B cell (primary cell): ENCODE measurements at regions of chr1 and their contacts with region 1.

Region 1: DNA sequence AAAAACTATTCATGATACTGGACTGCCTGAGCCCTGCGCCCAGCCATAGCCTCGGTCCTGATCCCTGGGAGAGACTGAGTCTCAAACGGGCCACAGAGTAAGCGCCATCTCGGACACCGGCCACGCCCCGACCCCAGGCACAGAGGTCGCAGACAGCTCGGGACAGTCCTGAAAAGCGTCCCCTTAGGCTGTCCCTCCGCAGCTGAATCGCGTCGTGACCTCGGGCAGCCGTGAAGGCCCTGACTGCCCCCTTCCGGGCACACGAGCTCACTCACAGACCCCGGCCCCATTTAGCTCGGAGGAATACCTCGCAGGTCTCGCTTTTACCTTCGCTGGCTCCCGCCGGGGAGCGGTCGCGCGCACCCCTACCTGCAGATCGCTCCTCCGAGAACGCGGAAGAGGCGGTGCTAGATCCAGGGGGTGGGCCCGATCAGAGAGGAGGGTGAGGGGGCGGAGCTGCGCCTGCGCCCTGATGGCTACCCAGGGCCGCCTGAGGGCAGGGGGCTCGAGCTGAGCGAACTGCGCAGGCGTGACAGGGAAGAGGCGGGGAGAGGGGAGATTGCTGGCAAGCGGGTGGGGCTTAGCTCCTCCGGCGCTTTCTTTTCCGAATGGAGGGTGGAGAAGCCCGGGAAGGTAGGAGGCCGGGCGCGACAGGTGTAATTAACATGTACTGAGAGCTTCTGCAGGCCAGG is at the start of gene MKNK1:
- DNase-seq: peak; percentile 98
- ATAC-seq: peak; percentile 99
- H3K4me3 ChIP-seq: peak within 1 kb of the TSS; percentile 72 to 95 (median 92)
- H3K4me3 Mint-ChIP-seq: peak within 1 kb of the TSS; percentile 96
- H3K27ac ChIP-seq: peak within 1 kb of the TSS; percentile 14 to 62
- H3K27ac Mint-ChIP-seq: peak within 1 kb of the TSS; percentile 95
- H3K4me1 ChIP-seq: peaks cover 12 to 15% of the 10 kb centered on the region in 2 donors
- H3K4me1 Mint-ChIP-seq: peaks cover 27% of the 10 kb centered on the region
- H3K27me3 ChIP-seq: no peaks in the 10 kb centered on the region
- H3K27me3 Mint-ChIP-seq: no peaks in the 10 kb centered on the region
- CTCF ChIP-seq: no peak
- total RNA-seq, gene MKNK1: 69.5 and 73.0 TPM in 2 replicates

Region 2: GRCh38 chr1:46616277-46617107 is 12.5 kb after region 1 on chr1 and contains the start of gene MOB3C:
- CTCF ChIA-PET with region 1: interaction called, 40 read pairs
- POLR2A ChIA-PET with region 1: interaction called, 27 read pairs
- intact Hi-C with region 1: loop called (anchors 1 kb)
- DNase-seq: peak; percentile 72
- ATAC-seq: peak; percentile 88
- H3K4me3 ChIP-seq: peak within 1 kb of the TSS; percentile 73 to 95 (median 82)
- H3K4me3 Mint-ChIP-seq: peak within 1 kb of the TSS; percentile 94
- H3K27ac ChIP-seq: peak within 1 kb of the TSS; percentile 74 to 85
- H3K27ac Mint-ChIP-seq: peak within 1 kb of the TSS; percentile 93
- H3K4me1 ChIP-seq: peaks cover 56 to 74% of the 10 kb centered on the region in 2 donors
- H3K4me1 Mint-ChIP-seq: peaks cover 61% of the 10 kb centered on the region
- H3K27me3 ChIP-seq: no peaks in the 10 kb centered on the region
- H3K27me3 Mint-ChIP-seq: no peaks in the 10 kb centered on the region
- CTCF ChIP-seq: no peak
- total RNA-seq, gene MOB3C: 19.2 and 19.3 TPM in 2 replicates

Region 3: GRCh38 chr1:46675549-46676314 is 71.7 kb after region 1 on chr1:
- CTCF ChIA-PET with region 1: no interaction called
- POLR2A ChIA-PET with region 1: no interaction called
- intact Hi-C with region 1: loop called (anchors 5 kb)
- DNase-seq: no peak
- ATAC-seq: no peak
- H3K4me3 ChIP-seq: no peak overlapping the region
- H3K4me3 Mint-ChIP-seq: no peak overlapping the region
- H3K27ac ChIP-seq: peak overlapping the region; percentile 41 to 61
- H3K27ac Mint-ChIP-seq: peak overlapping the region; percentile 78
- H3K4me1 ChIP-seq: peaks cover 5 to 9% of the 10 kb centered on the region in 2 donors
- H3K4me1 Mint-ChIP-seq: peaks cover 13% of the 10 kb centered on the region
- H3K27me3 ChIP-seq: no peaks in the 10 kb centered on the region
- H3K27me3 Mint-ChIP-seq: no peaks in the 10 kb centered on the region
- CTCF ChIP-seq: no peak